ENCODE measurements at regions of chr6 and their contacts with region 1.

Region 1: DNA sequence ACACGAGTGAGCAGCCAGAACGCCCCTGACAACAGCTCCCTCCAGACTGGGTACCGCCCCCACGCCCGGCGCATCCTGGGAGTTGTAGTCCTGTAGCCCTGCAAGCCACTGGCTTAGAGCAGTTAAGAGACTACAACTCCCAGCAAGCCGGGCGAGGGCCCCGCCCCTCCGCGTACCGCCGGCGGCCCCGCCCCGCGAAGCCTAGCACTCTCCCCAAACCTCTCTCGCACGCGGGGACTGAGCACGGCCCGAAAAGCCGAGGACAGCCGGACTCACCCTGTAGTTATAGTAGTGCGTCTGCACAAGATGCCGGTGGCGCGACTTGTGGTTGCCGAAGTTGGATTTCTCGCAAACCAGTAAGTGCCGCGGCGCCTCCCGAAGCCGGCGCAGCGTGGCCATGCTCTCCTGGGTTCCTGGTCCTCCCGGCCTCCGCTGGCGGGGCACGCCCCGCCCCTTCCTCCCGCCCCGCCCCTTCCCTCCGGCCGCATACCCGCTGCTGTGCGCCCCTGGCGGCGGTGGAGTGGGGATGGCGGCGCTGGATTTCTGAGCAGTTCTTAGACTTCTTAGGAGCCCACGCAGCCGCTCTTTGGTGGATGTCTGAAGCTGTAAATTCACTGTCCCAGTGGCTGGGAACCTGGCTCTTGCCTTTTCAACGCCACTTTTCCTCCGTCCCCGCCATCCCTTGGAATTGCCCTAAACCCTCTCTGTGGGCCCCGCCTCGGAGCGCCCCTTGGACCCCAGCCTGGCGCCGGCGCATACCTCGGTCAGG is at the start of gene RPP40:
- DNase-seq: peak; percentile 99
- ATAC-seq: peak; percentile 97
- H3K4me3 Mint-ChIP-seq: peak within 1 kb of the TSS; percentile 87
- H3K27ac Mint-ChIP-seq: peak within 1 kb of the TSS; percentile 94
- H3K4me1 Mint-ChIP-seq: peaks cover 8% of the 10 kb centered on the region
- H3K27me3 Mint-ChIP-seq: no peaks in the 10 kb centered on the region
- total RNA-seq, gene RPP40: 7.7 to 11.2 TPM

Region 2: GRCh38 chr6:4135665-4136353 is 868.0 kb before region 1 on chr6:
- CTCF ChIA-PET with region 1: no interaction called
- POLR2A ChIA-PET with region 1: no interaction called
- intact Hi-C with region 1: loop called in 1 of 2 experiments (anchors 1 kb)
- DNase-seq: peak; percentile 98
- ATAC-seq: peak; percentile 92
- H3K4me3 Mint-ChIP-seq: peak overlapping the region; percentile 79
- H3K27ac Mint-ChIP-seq: peak overlapping the region; percentile 85
- H3K4me1 Mint-ChIP-seq: peaks cover 46% of the 10 kb centered on the region
- H3K27me3 Mint-ChIP-seq: no peaks in the 10 kb centered on the region

Region 3: DNA sequence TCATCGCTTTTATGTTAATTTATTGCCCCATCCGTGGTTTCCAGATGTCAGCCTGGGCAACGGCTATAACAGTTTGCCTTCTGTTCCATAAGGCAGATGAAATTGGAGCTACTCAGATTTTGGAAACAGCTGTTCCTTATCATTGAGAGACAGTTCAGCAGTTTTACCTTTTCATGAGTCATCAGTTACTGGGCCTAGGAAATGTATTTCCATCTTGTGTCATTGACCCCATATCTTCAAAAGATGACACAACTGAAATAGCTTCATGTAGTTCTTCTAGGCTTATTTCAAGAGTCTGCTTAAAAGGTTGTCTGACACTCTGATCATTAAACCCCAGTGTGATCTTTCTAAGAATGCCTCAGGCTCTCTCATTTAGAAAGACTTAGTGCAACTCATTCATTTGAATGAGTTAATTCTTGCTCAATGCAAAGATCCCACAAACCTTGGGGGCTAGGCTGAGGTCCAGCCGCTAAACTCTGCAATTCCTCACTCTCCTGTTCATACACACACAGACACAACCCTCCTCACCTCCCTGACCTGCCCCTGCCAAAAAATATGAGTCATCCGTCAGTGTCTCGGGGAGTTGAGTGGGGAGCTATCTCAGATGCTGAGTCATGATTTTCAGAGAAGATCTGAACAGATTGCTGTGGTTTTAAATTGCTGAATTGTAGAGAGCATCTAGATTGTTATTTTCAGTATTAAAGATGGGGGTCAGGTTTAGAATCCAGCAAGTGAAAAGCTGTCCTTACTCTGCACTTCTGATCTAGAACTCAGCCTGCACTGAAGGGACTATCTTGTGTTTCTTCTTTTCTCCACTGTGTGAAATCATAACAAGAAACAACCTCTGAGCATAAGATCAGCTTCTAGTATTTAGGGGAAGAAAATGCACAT is 61.8 kb before region 1 on chr6:
- CTCF ChIA-PET with region 1: interaction called, 5 read pairs
- POLR2A ChIA-PET with region 1: no interaction called
- intact Hi-C with region 1: loop called in 1 of 2 experiments (anchors 5 kb)
- DNase-seq: peak; percentile 73
- ATAC-seq: peak; percentile 93
- H3K4me3 Mint-ChIP-seq: no peak overlapping the region
- H3K27ac Mint-ChIP-seq: peak overlapping the region; percentile 61
- H3K4me1 Mint-ChIP-seq: peaks cover 47% of the 10 kb centered on the region
- H3K27me3 Mint-ChIP-seq: no peaks in the 10 kb centered on the region

Region 4: GRCh38 chr6:5085193-5085647 is 81.4 kb after region 1 on chr6 and contains the start of gene PPP1R3G:
- CTCF ChIA-PET with region 1: no interaction called
- POLR2A ChIA-PET with region 1: no interaction called
- intact Hi-C with region 1: loop called in 1 of 2 experiments (anchors 1 kb)
- DNase-seq: peak; percentile 37
- ATAC-seq: peak; percentile 15
- H3K4me3 Mint-ChIP-seq: peak within 1 kb of the TSS; percentile 69
- H3K27ac Mint-ChIP-seq: no peak within 1 kb of the TSS
- H3K4me1 Mint-ChIP-seq: peaks cover 7% of the 10 kb centered on the region
- H3K27me3 Mint-ChIP-seq: peaks cover 39% of the 10 kb centered on the region
- total RNA-seq, gene PPP1R3G: 0.09 to 0.11 TPM

Region 5: GRCh38 chr6:6131492-6132109 is 1127.8 kb after region 1 on chr6:
- CTCF ChIA-PET with region 1: no interaction called
- POLR2A ChIA-PET with region 1: no interaction called
- intact Hi-C with region 1: no loop called
- DNase-seq: peak; percentile 11
- ATAC-seq: no peak
- H3K4me3 Mint-ChIP-seq: no peak overlapping the region
- H3K27ac Mint-ChIP-seq: no peak overlapping the region
- H3K4me1 Mint-ChIP-seq: no peaks in the 10 kb centered on the region
- H3K27me3 Mint-ChIP-seq: peaks cover 5% of the 10 kb centered on the region